ENCODE measurements at regions of chr10 and their contacts with region 1.

Region 1: GRCh38 chr10:73096449-73097304 is at the start of gene P4HA1:
- DNase-seq: peak; percentile 95
- H3K4me3 ChIP-seq: peak within 1 kb of the TSS; percentile 90
- H3K27ac ChIP-seq: peak within 1 kb of the TSS; percentile 95
- H3K27me3 ChIP-seq: no peaks in the 10 kb centered on the region
- CTCF ChIP-seq: peak; percentile 56
- polyA plus RNA-seq, gene P4HA1: 176 and 245 TPM in 2 replicates

Region 2: DNA sequence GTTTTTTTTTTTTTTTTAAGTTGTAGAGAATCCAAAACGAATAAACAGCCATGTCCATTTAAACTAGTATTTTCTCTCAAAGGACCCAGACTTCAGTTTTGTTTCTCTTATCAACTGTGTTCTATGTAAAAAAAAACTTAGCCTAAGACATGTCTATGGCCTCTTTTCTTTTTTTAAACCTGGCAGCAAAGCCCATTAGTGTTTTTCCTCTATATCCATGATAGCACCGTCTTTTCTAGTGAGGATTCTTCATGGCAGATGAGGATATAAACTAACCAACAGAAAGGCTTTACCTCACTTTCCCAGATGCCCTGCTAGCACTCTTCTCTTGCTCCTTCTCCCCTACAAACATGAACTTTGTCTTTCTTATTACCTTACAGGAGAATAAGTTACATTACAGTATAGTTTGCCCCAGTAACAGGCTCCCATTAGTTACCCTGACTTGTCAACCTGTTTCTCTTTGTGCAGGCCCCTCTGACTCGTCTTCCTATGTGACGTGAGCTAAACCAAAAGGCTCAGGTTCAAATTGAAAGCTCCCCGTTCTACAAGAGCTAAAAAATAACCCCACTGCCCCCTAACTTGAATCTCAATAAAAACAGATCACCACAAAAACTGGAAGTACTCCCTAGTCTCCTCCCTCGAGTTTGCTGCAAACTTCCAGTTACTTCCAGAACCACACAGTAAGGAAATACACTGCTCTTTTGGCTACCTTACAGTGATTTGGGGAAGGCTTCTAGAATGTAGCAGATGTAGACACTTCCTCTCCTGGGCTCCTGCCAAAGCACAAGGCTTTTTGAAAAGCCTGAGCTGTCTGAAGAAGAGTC is 20.1 kb before region 1 on chr10:
- CTCF ChIA-PET with region 1: interaction called, 7 read pairs
- POLR2A ChIA-PET with region 1: interaction called, 18 read pairs
- DNase-seq: peak; percentile 62
- H3K4me3 ChIP-seq: no peak overlapping the region
- H3K27ac ChIP-seq: peak overlapping the region; percentile 33
- H3K27me3 ChIP-seq: no peaks in the 10 kb centered on the region
- CTCF ChIP-seq: no peak

Region 3: GRCh38 chr10:73110345-73110849 is 13.7 kb after region 1 on chr10 and contains the start of gene NUDT13:
- CTCF ChIA-PET with region 1: interaction called, 19 read pairs
- POLR2A ChIA-PET with region 1: interaction called, 26 read pairs
- DNase-seq: no peak
- H3K4me3 ChIP-seq: peak within 1 kb of the TSS; percentile 56
- H3K27ac ChIP-seq: peak within 1 kb of the TSS; percentile 57
- H3K27me3 ChIP-seq: no peaks in the 10 kb centered on the region
- CTCF ChIP-seq: no peak
- polyA plus RNA-seq, gene NUDT13: 1.4 TPM in 2 replicates

Region 4: GRCh38 chr10:73159038-73159648 is 62.5 kb after region 1 on chr10:
- CTCF ChIA-PET with region 1: interaction called, 23 read pairs
- POLR2A ChIA-PET with region 1: interaction called, 6 read pairs
- DNase-seq: peak; percentile 15
- H3K4me3 ChIP-seq: no peak overlapping the region
- H3K27ac ChIP-seq: no peak overlapping the region
- H3K27me3 ChIP-seq: no peaks in the 10 kb centered on the region
- CTCF ChIP-seq: peak; percentile 76

Measured in AG04450 (cell line).